Calu3 (cell line): ENCODE measurements at regions of chr12 and their contacts with region 1.

Region 1: GRCh38 chr12:105356471-105356870 is 26.0 kb downstream of the C12orf75 start:
- DNase-seq: no peak
- H3K4me3 Mint-ChIP-seq: no peak overlapping the region
- H3K27ac Mint-ChIP-seq: no peak overlapping the region
- H3K4me1 Mint-ChIP-seq: peaks cover 50% of the 10 kb centered on the region
- H3K27me3 Mint-ChIP-seq: no peaks in the 10 kb centered on the region
- CTCF ChIP-seq: no peak

Region 2: DNA sequence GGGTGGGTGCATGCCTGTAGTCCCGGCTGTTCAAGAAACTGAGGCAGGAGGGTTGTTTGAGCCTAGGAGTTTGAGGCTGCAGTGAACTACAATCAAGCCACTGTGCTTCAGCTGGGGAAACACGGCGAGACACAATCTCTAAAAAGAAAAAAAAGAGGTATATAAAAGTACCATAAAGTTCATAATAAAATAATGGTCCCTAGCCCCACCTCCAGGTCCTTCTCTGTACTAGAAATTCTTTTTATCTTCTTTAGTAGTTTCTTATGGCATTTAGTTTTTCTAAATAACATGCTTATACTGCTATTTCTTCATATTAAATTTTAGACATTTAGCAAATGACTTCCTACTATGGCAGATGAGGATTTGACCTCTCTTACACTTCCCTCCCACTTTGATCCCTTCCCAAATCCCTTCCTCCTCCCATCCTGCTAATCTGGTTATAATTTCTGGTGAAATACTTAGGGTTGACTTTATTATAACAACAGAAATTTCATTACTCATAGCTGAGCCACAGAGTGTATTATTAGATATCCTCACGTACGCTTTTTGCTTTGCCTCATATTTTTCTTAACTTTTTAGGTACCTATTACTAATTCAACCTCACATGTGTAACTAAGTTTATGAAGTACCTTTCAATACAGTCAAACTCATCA is 493.0 kb before region 1 on chr12:
- CTCF ChIA-PET with region 1: interaction called, 16 read pairs
- intact Hi-C with region 1: no loop called
- DNase-seq: no peak
- H3K4me3 Mint-ChIP-seq: no peak overlapping the region
- H3K27ac Mint-ChIP-seq: no peak overlapping the region
- H3K4me1 Mint-ChIP-seq: peaks cover 11% of the 10 kb centered on the region
- H3K27me3 Mint-ChIP-seq: no peaks in the 10 kb centered on the region
- CTCF ChIP-seq: no peak

Region 3: DNA sequence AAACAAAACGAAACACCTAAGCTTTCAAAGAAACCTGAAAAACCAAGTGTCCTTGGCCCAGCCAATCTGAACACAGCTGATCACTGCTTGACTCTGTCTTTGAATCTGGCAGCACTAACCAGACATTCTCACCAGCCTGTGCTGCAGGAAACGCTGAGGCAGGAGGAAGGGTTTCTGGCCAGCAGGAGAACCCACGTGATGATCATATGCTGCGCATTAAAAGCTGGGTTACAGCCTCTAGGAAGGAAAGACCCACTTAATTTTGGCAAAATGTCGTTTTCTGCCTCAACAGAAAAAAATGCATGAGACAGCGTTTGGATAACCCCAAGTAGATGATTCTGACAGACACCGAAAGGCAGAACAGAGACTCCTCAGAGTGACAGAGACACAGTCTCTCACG is 130.3 kb before region 1 on chr12:
- CTCF ChIA-PET with region 1: no interaction called
- intact Hi-C with region 1: no loop called
- DNase-seq: no peak
- H3K4me3 Mint-ChIP-seq: no peak overlapping the region
- H3K27ac Mint-ChIP-seq: no peak overlapping the region
- H3K4me1 Mint-ChIP-seq: no peaks in the 10 kb centered on the region
- H3K27me3 Mint-ChIP-seq: no peaks in the 10 kb centered on the region
- CTCF ChIP-seq: no peak